T-cell (primary cell): ENCODE measurements at regions of chr1 and their contacts with region 1.

Region 1: GRCh38 chr1:75724472-75725022 is at the start of gene ACADM:
- DNase-seq: peak; percentile 61 to 86 (median 75)
- ATAC-seq: peak; percentile 95 to 98 (median 98)
- H3K4me3 ChIP-seq: peak within 1 kb of the TSS; percentile 90 to 97
- H3K4me3 Mint-ChIP-seq: peak within 1 kb of the TSS; percentile 91 to 99 (median 95)
- H3K27ac ChIP-seq: peak within 1 kb of the TSS; percentile 81
- H3K27ac Mint-ChIP-seq: peak within 1 kb of the TSS; percentile 92 to 96
- H3K4me1 ChIP-seq: peaks cover 10 to 25% of the 10 kb centered on the region in 2 experiments
- H3K4me1 Mint-ChIP-seq: peaks cover 54 to 59% (median 54%) of the 10 kb centered on the region in 3 donors
- H3K27me3 ChIP-seq: no peaks in the 10 kb centered on the region
- H3K27me3 Mint-ChIP-seq: no peaks in the 10 kb centered on the region
- total RNA-seq, gene ACADM: 16.6 to 29.3 (median 23.0) TPM

Region 2: DNA sequence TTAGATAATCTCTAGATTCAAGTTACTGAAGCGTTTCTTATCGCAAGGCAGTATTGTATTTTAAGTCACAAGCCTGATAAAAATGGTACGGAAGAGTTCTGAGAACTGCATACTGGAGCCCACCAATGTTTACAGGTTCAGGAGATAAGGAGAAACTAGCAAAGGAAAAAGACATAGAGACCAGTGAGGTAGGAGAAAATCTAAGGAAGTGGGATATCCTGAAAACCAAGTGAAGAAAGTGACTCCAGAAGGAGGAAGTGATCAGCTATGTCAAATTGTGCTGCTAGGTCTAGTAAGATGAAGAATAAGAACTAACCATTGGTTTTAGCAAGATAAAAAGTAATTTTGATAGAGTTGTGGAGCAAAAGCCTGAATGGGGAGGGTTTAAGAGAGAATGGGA is 31.0 kb before region 1 on chr1:
- CTCF ChIA-PET with region 1: no interaction called
- POLR2A ChIA-PET with region 1: no interaction called
- DNase-seq: no peak
- ATAC-seq: no peak
- H3K4me3 ChIP-seq: no peak overlapping the region
- H3K4me3 Mint-ChIP-seq: no peak overlapping the region
- H3K27ac ChIP-seq: no peak overlapping the region
- H3K27ac Mint-ChIP-seq: no peak overlapping the region
- H3K4me1 ChIP-seq: no peaks in the 10 kb centered on the region
- H3K4me1 Mint-ChIP-seq: no peaks in the 10 kb centered on the region
- H3K27me3 ChIP-seq: peaks cover 0 to 5% of the 10 kb centered on the region in 2 experiments
- H3K27me3 Mint-ChIP-seq: peaks cover 6 to 21% of the 10 kb centered on the region in 2 donors

Region 3: GRCh38 chr1:75745276-75745675 is 20.7 kb after region 1 on chr1:
- CTCF ChIA-PET with region 1: no interaction called
- POLR2A ChIA-PET with region 1: interaction called in 1 of 2 experiments, 15 read pairs
- DNase-seq: no peak
- ATAC-seq: no peak
- H3K4me3 ChIP-seq: no peak overlapping the region
- H3K4me3 Mint-ChIP-seq: no peak overlapping the region
- H3K27ac ChIP-seq: no peak overlapping the region
- H3K27ac Mint-ChIP-seq: no peak overlapping the region
- H3K4me1 ChIP-seq: no peaks in the 10 kb centered on the region
- H3K4me1 Mint-ChIP-seq: peaks cover 0 to 4% (median 0%) of the 10 kb centered on the region in 3 donors
- H3K27me3 ChIP-seq: no peaks in the 10 kb centered on the region
- H3K27me3 Mint-ChIP-seq: no peaks in the 10 kb centered on the region

Region 4: DNA sequence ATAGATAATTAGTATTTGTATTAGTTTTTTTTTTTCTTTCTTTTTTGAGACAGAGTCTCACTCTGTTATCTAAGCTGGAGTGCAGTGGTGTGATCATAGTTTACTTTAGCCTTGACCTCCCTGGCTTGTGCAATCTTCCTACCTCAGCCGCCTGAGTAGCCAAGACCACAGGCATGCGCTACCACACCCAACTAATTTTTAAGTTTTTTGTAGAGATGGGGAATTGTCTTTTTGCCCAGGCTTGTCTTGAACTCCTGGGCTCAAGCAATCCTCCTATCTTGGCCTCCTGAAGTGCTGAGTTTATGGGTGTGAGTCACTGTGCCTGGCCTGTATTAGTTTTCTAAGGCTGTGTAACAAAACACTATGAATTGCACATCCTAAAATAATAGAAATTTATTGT is 130.5 kb after region 1 on chr1:
- CTCF ChIA-PET with region 1: no interaction called
- POLR2A ChIA-PET with region 1: no interaction called
- DNase-seq: no peak
- ATAC-seq: no peak
- H3K4me3 ChIP-seq: no peak overlapping the region
- H3K4me3 Mint-ChIP-seq: no peak overlapping the region
- H3K27ac ChIP-seq: no peak overlapping the region
- H3K27ac Mint-ChIP-seq: no peak overlapping the region
- H3K4me1 ChIP-seq: no peaks in the 10 kb centered on the region
- H3K4me1 Mint-ChIP-seq: no peaks in the 10 kb centered on the region
- H3K27me3 ChIP-seq: no peaks in the 10 kb centered on the region
- H3K27me3 Mint-ChIP-seq: peaks cover 0 to 5% of the 10 kb centered on the region in 2 donors

Region 5: GRCh38 chr1:76260279-76260678 is 535.7 kb after region 1 on chr1:
- CTCF ChIA-PET with region 1: no interaction called
- POLR2A ChIA-PET with region 1: interaction called in 1 of 2 experiments, 12 read pairs
- DNase-seq: peak in 1 of 35 experiments; percentile 21
- ATAC-seq: peak; percentile 43 to 67 (median 54)
- H3K4me3 ChIP-seq: no peak overlapping the region
- H3K4me3 Mint-ChIP-seq: peak overlapping the region in 1 of 3 donors; percentile 14
- H3K27ac ChIP-seq: no peak overlapping the region
- H3K27ac Mint-ChIP-seq: peak overlapping the region in 1 of 2 donors; percentile 54
- H3K4me1 ChIP-seq: peaks cover 10 to 49% of the 10 kb centered on the region in 2 experiments
- H3K4me1 Mint-ChIP-seq: peaks cover 48 to 74% (median 59%) of the 10 kb centered on the region in 3 donors
- H3K27me3 ChIP-seq: no peaks in the 10 kb centered on the region
- H3K27me3 Mint-ChIP-seq: no peaks in the 10 kb centered on the region